Naive thymus-derived CD4-positive, alpha-beta T cell (primary cell): ENCODE measurements at regions of chr1 and their contacts with region 1.

Region 1: DNA sequence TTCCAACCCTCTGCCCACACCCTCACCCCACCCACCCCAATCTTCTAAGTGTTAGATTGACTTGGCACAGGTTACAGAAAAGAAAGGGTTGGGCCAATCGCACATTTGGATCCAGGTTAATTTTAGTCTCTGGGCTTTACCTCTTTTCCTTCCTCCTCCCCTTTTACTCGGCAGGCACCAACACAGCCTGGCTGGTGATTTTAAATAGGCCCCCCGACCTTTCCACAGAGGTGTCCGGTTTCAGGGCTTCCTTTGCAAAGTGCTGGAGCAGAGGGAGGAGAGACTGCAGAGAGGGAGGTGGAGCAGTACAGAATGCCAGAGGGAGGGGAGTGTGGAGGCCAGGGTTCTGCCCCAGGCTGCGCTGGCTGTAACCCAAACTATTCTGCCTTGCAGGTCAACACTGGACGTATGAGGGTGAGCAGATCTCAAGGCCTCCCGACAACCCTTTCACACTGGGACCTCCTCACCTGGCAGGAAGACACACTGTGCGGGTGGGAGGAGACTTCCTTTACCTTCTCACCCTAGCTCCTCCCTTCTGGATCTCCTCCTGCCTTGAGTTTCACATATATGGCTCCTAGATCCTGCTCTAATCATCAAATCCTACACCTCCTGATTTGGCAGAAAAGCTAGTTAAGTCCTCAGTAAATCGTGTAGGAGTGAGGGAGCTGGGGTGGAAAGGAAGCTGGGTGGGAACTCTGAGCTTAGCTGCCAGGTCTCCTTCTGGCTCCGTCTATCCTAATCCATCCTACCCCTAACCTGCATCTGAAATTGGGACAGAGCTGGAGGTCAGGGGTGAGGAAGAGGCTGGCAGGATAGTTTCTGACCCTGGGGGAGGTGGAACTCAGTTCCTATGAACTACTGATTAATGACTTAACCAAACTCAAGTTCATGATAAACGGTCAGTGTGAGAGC is 2.4 kb downstream of the CA14 start:
- DNase-seq: no peak
- ATAC-seq: no peak
- H3K4me3 ChIP-seq: no peak overlapping the region
- H3K4me3 Mint-ChIP-seq: peak overlapping the region in 1 of 10 donors; percentile 32
- H3K27ac ChIP-seq: no peak overlapping the region
- H3K27ac Mint-ChIP-seq: no peak overlapping the region
- H3K4me1 ChIP-seq: peaks cover 6 to 8% of the 10 kb centered on the region in 2 donors
- H3K4me1 Mint-ChIP-seq: peaks cover 6 to 23% (median 15%) of the 10 kb centered on the region in 7 donors
- H3K27me3 ChIP-seq: peaks cover 0 to 10% of the 10 kb centered on the region in 2 donors
- H3K27me3 Mint-ChIP-seq: peaks cover 13 to 49% (median 26%) of the 10 kb centered on the region in 5 donors

Region 2: GRCh38 chr1:150281837-150282653 is 22.0 kb after region 1 on chr1 and contains the start of gene CIART:
- CTCF ChIA-PET with region 1: interaction called, 7 read pairs
- POLR2A ChIA-PET with region 1: interaction called, 5 read pairs
- intact Hi-C with region 1: loop called (anchors 1 kb)
- DNase-seq: peak; percentile 34 to 88 (median 82)
- ATAC-seq: peak; percentile 95
- H3K4me3 ChIP-seq: peak within 1 kb of the TSS; percentile 58
- H3K4me3 Mint-ChIP-seq: peak within 1 kb of the TSS; percentile 84 to 98 (median 94)
- H3K27ac ChIP-seq: peak within 1 kb of the TSS; percentile 52
- H3K27ac Mint-ChIP-seq: peak within 1 kb of the TSS; percentile 80 to 98 (median 91)
- H3K4me1 ChIP-seq: peaks cover 11 to 23% of the 10 kb centered on the region in 2 donors
- H3K4me1 Mint-ChIP-seq: peaks cover 20 to 36% (median 32%) of the 10 kb centered on the region in 7 donors
- H3K27me3 ChIP-seq: no peaks in the 10 kb centered on the region
- H3K27me3 Mint-ChIP-seq: peaks cover 0 to 13% (median 0%) of the 10 kb centered on the region in 5 donors
- total RNA-seq, gene CIART: 1.4 to 2.6 (median 2.4) TPM

Region 3: GRCh38 chr1:150293433-150294168 is 33.6 kb after region 1 on chr1 and contains the start of gene MRPS21:
- CTCF ChIA-PET with region 1: interaction called, 3 read pairs
- POLR2A ChIA-PET with region 1: no interaction called
- intact Hi-C with region 1: loop called (anchors 1 kb)
- DNase-seq: peak; percentile 64 to 88 (median 83)
- ATAC-seq: peak; percentile 99
- H3K4me3 ChIP-seq: peak within 1 kb of the TSS; percentile 76
- H3K4me3 Mint-ChIP-seq: peak within 1 kb of the TSS; percentile 85 to 97 (median 92)
- H3K27ac ChIP-seq: peak within 1 kb of the TSS; percentile 92
- H3K27ac Mint-ChIP-seq: peak within 1 kb of the TSS; percentile 92 to 100 (median 98)
- H3K4me1 ChIP-seq: peaks cover 10 to 14% of the 10 kb centered on the region in 2 donors
- H3K4me1 Mint-ChIP-seq: peaks cover 20 to 45% (median 32%) of the 10 kb centered on the region in 7 donors
- H3K27me3 ChIP-seq: no peaks in the 10 kb centered on the region
- H3K27me3 Mint-ChIP-seq: no peaks in the 10 kb centered on the region
- total RNA-seq, gene MRPS21: 47.9 to 72.8 (median 67.5) TPM

Region 4: GRCh38 chr1:150429805-150430204 is 169.8 kb after region 1 on chr1:
- CTCF ChIA-PET with region 1: interaction called, 4 read pairs
- POLR2A ChIA-PET with region 1: no interaction called
- intact Hi-C with region 1: loop called (anchors 1 to 2 kb)
- DNase-seq: peak in 6 of 9 donors; percentile 3 to 35 (median 14)
- ATAC-seq: peak; percentile 42
- H3K4me3 ChIP-seq: no peak overlapping the region
- H3K4me3 Mint-ChIP-seq: no peak overlapping the region
- H3K27ac ChIP-seq: no peak overlapping the region
- H3K27ac Mint-ChIP-seq: peak overlapping the region in 8 of 9 donors; percentile 20 to 87 (median 53)
- H3K4me1 ChIP-seq: no peaks in the 10 kb centered on the region
- H3K4me1 Mint-ChIP-seq: peaks cover 2 to 37% (median 19%) of the 10 kb centered on the region in 7 donors
- H3K27me3 ChIP-seq: no peaks in the 10 kb centered on the region
- H3K27me3 Mint-ChIP-seq: no peaks in the 10 kb centered on the region

Region 5: DNA sequence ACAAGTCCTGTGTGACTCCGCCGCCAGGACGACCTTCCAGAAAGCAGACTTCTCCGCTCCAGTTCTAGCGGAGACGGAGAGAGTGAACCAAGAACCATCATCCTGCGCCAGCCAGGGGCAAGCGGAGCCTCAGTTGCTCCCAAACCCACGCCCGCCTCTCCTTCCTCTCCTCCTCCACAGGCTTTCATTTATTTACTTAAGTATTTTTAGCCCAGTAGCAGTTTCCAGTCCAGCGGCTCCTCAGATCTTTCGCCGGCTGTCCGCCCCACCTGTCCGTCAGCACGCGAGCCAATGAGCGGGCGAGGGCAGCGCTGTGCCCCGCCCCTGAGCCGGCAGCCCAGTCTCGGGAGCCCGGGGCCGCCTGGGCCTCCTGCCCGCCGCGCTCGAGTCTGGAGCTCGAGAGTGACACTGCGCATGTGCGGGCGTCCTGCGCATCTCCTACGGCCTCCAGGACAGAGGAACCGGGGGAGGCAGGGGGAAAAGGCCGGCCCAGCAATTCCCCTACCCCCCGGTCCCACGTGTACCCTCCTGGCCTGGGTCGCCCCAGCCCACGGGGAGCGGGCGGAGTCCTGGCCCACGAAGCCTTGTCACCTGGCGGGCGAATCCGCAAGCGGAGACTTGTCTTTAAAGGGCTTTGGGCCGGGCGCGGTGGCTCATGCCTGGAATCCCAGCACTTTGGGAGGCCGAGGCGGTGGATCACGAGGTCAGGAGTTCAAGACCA is 255.5 kb after region 1 on chr1 and contains the start of gene FALEC:
- CTCF ChIA-PET with region 1: interaction called, 8 read pairs
- POLR2A ChIA-PET with region 1: no interaction called
- intact Hi-C with region 1: loop called in 1 of 2 experiments (anchors 5 kb)
- DNase-seq: peak; percentile 81 to 94 (median 86)
- ATAC-seq: peak; percentile 99
- H3K4me3 ChIP-seq: peak within 1 kb of the TSS; percentile 58
- H3K4me3 Mint-ChIP-seq: peak within 1 kb of the TSS; percentile 83 to 94 (median 90)
- H3K27ac ChIP-seq: peak within 1 kb of the TSS; percentile 64
- H3K27ac Mint-ChIP-seq: peak within 1 kb of the TSS; percentile 40 to 87 (median 76)
- H3K4me1 ChIP-seq: peaks cover 0 to 6% of the 10 kb centered on the region in 2 donors
- H3K4me1 Mint-ChIP-seq: peaks cover 9 to 17% (median 10%) of the 10 kb centered on the region in 7 donors
- H3K27me3 ChIP-seq: no peaks in the 10 kb centered on the region
- H3K27me3 Mint-ChIP-seq: no peaks in the 10 kb centered on the region
- total RNA-seq, gene FALEC: 0.44 to 2.5 TPM in 2 of 5 experiments, not detected in the others

Region 6: DNA sequence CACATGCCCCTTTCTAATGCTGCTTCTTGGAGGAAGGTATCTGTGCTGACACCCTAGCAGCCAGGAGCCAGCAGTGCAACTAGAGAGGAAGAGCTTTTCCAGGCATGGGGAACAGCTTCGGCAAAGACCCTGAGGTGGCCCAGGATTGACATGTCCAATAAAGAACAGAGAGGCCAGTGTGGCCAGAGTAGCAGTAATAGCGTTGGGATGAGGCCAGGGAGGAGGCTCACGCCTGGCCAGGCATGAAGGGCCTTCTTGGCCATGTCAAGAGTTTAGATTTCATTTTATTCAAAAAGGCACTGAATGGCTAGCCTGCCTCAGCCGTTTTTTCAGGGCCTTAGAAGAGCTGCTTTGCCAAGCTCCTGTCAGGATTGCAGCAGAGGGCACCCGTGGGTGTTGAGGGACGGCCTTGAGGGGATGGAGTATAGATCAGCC is 272.9 kb after region 1 on chr1:
- CTCF ChIA-PET with region 1: no interaction called
- POLR2A ChIA-PET with region 1: no interaction called
- intact Hi-C with region 1: loop called (anchors 1 to 2 kb)
- DNase-seq: no peak
- ATAC-seq: no peak
- H3K4me3 ChIP-seq: no peak overlapping the region
- H3K4me3 Mint-ChIP-seq: no peak overlapping the region
- H3K27ac ChIP-seq: no peak overlapping the region
- H3K27ac Mint-ChIP-seq: no peak overlapping the region
- H3K4me1 ChIP-seq: no peaks in the 10 kb centered on the region
- H3K4me1 Mint-ChIP-seq: peaks cover 0 to 6% (median 4%) of the 10 kb centered on the region in 7 donors
- H3K27me3 ChIP-seq: no peaks in the 10 kb centered on the region
- H3K27me3 Mint-ChIP-seq: peaks cover 0 to 5% (median 0%) of the 10 kb centered on the region in 5 donors

Region 7: DNA sequence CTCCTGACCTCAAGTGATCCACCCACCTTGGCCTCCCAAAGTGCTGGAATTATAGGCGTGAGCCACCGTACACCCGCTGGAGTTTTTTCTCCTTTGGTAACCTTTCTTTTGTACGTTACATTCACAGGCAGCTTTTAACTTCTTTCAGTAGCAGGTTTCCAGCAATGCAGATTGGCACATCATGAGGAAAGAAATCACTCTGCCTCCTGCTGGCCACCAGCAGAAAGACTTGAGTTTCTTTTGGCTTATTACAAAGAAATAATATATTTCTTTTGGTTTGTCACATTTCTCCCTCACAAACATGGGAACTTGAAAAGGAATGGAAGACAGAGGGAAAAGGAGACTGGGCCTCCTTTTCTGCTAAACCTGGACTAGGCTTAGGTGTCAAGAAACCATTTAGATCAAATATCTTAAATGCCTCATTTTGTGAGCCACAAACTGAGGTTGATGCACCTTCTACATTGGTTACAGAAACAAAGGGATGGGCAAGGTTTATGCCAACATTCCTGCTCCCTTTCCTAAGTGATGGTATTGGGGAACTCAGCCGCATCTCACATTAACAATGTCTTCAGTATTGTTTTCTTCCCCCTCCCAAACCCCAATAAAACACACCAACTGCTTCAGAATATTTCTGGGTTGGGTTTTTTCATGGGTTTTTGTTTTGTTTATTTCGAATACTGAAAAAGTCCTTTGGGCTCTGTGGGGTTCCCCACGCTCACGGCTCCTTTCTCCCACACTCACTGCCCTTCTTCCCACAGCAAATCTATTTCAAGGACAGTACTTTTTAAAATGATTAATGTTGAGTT is 361.7 kb after region 1 on chr1:
- CTCF ChIA-PET with region 1: no interaction called
- POLR2A ChIA-PET with region 1: no interaction called
- intact Hi-C with region 1: loop called in 1 of 2 experiments (anchors 2 kb)
- DNase-seq: peak in 7 of 9 donors; percentile 53 to 74 (median 65)
- ATAC-seq: peak; percentile 78
- H3K4me3 ChIP-seq: no peak overlapping the region
- H3K4me3 Mint-ChIP-seq: peak overlapping the region in 8 of 10 donors; percentile 16 to 64 (median 46)
- H3K27ac ChIP-seq: peak overlapping the region; percentile 49
- H3K27ac Mint-ChIP-seq: peak overlapping the region; percentile 48 to 91 (median 83)
- H3K4me1 ChIP-seq: peaks cover 5 to 32% of the 10 kb centered on the region in 2 donors
- H3K4me1 Mint-ChIP-seq: peaks cover 17 to 65% (median 51%) of the 10 kb centered on the region in 7 donors
- H3K27me3 ChIP-seq: no peaks in the 10 kb centered on the region
- H3K27me3 Mint-ChIP-seq: no peaks in the 10 kb centered on the region